Right ventricle myocardium inferior (tissue), 1 donor: ENCODE measurements at regions of chr5 and their contacts with region 1.

Region 1: DNA sequence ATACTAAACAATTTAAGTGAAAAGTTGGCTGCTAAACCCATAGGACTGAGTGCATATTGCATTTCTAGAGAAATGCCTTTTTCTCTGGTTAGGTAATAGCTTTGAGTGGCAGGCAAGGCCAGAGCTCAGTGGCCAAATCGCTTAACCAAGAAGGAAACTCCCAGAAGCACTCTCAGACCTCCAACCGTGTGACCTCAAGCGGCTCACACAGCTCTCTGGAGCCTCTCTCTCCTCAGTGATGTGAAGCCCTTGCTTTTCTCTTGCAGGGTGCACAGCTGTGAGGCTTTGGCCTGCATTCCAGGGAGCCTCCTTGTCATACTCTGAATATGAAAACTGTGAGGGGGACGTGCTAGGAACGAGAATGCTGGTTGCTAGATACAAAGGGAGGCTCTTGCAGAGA is 106.7 kb downstream of the INSYN2B start:
- DNase-seq: peak; percentile 80
- ATAC-seq: peak; percentile 88

Region 2: GRCh38 chr5:169805527-169805934 is 68.1 kb before region 1 on chr5:
- intact Hi-C with region 1: loop called (anchors 10 kb)
- DNase-seq: no peak
- ATAC-seq: no peak